Astrocyte of the cerebellum (primary cell): ENCODE measurements at regions of chr4 and their contacts with region 1.

Region 1: GRCh38 chr4:186297013-186297645 is 31.1 kb downstream of the F11 start:
- DNase-seq: peak; percentile 59
- H3K4me3 ChIP-seq: no peak overlapping the region
- CTCF ChIP-seq: peak; percentile 49

Region 2: GRCh38 chr4:186249785-186250754 is 47.1 kb before region 1 on chr4:
- in situ Hi-C with region 1: no loop called
- DNase-seq: no peak
- H3K4me3 ChIP-seq: no peak overlapping the region
- CTCF ChIP-seq: no peak

Region 3: GRCh38 chr4:186392026-186392425 is 94.9 kb after region 1 on chr4:
- in situ Hi-C with region 1: no loop called
- DNase-seq: no peak
- H3K4me3 ChIP-seq: no peak overlapping the region
- CTCF ChIP-seq: no peak

Region 4: GRCh38 chr4:186592966-186593586 is 295.9 kb after region 1 on chr4:
- in situ Hi-C with region 1: loop called (anchors 10 kb)
- DNase-seq: no peak
- H3K4me3 ChIP-seq: no peak overlapping the region
- CTCF ChIP-seq: no peak